Prostate gland (tissue), 2 donors: ENCODE measurements at regions of chr1 and their contacts with region 1.

Region 1: GRCh38 chr1:15152318-15153183 is 996 bp upstream of the TMEM51 start:
- DNase-seq: peak; percentile 91
- H3K4me3 ChIP-seq: peak overlapping the region; percentile 71 to 82
- H3K27ac ChIP-seq: peak overlapping the region; percentile 79 to 91
- H3K4me1 ChIP-seq: peaks cover 4% of the 10 kb centered on the region
- H3K27me3 ChIP-seq: no peaks in the 10 kb centered on the region
- CTCF ChIP-seq: peak; percentile 57 to 84 (median 74)
- POLR2A ChIP-seq: peak; percentile 66

Region 2: GRCh38 chr1:15201849-15202551 is 49.4 kb after region 1 on chr1:
- intact Hi-C with region 1: loop called (anchors 5 kb)
- DNase-seq: no peak
- H3K4me3 ChIP-seq: no peak overlapping the region
- H3K27ac ChIP-seq: peak overlapping the region; percentile 50 to 74
- H3K4me1 ChIP-seq: no peaks in the 10 kb centered on the region
- H3K27me3 ChIP-seq: no peaks in the 10 kb centered on the region
- CTCF ChIP-seq: no peak
- POLR2A ChIP-seq: no peak

Region 3: GRCh38 chr1:15272009-15272788 is 119.6 kb after region 1 on chr1:
- intact Hi-C with region 1: loop called (anchors 1 kb)
- DNase-seq: peak; percentile 59
- H3K4me3 ChIP-seq: no peak overlapping the region
- H3K27ac ChIP-seq: no peak overlapping the region
- H3K4me1 ChIP-seq: no peaks in the 10 kb centered on the region
- H3K27me3 ChIP-seq: no peaks in the 10 kb centered on the region
- CTCF ChIP-seq: peak in 3 of 4 experiments; percentile 70 to 86 (median 82)
- POLR2A ChIP-seq: no peak

Region 4: DNA sequence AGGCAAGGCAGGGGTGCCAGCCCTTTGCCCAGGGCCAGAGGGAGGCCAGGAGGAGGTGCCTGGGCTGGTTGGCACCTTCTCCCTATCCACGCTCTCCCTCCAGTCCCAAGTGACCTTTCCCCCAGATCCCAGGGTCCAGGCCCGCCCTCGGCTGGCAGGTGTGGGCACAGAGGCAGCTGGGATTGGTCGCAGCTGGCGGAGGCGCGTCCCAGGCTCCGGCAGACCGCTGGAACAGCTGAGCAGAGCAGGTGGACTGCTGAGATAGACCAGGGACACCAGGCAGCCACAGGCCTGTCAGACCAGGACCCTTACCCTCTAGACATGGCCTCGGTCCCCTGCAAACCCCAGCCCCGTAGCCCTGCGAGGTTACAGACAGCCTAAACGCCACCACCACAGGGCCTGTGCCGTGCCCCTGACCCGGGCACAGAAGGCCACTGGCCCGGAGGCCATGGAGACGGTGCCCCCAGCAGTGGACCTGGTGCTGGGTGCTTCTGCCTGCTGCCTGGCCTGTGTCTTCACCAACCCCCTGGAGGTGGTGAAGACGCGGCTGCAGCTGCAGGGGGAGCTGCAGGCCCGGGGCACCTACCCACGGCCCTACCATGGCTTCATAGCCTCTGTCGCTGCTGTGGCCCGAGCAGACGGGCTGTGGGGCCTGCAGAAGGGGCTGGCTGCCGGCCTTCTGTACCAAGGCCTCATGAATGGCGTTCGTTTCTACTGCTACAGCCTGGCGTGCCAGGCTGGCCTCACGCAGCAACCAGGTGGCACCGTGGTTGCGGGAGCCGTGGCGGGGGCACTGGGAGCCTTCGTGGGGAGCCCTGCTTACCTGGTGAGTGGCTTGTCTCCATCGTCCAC is 583.7 kb after region 1 on chr1 and contains the start of gene SLC25A34:
- intact Hi-C with region 1: no loop called
- DNase-seq: no peak
- H3K4me3 ChIP-seq: no peak within 1 kb of the TSS
- H3K27ac ChIP-seq: no peak within 1 kb of the TSS
- H3K4me1 ChIP-seq: peaks cover 6% of the 10 kb centered on the region
- H3K27me3 ChIP-seq: no peaks in the 10 kb centered on the region
- CTCF ChIP-seq: no peak
- POLR2A ChIP-seq: peak; percentile 9
- total RNA-seq, gene SLC25A34: 1.1 to 1.4 TPM